ENCODE measurements at regions of chr2 and their contacts with region 1.

Region 1: GRCh38 chr2:102355526-102356380 is at the start of gene IL18R1:
- DNase-seq: peak; percentile 54 to 56
- ATAC-seq: peak; percentile 92 to 96
- H3K4me3 ChIP-seq: peak within 1 kb of the TSS; percentile 63 to 80 (median 68)
- H3K27ac ChIP-seq: peak within 1 kb of the TSS; percentile 14 to 61 (median 40)
- H3K4me1 ChIP-seq: peaks cover 0 to 6% of the 10 kb centered on the region in 2 donors
- H3K27me3 ChIP-seq: no peaks in the 10 kb centered on the region
- CTCF ChIP-seq: peak; percentile 62 to 91 (median 73)
- POLR2A ChIP-seq: no peak
- total RNA-seq, gene IL18R1: 0.36 to 2.8 (median 1.1) TPM

Region 2: DNA sequence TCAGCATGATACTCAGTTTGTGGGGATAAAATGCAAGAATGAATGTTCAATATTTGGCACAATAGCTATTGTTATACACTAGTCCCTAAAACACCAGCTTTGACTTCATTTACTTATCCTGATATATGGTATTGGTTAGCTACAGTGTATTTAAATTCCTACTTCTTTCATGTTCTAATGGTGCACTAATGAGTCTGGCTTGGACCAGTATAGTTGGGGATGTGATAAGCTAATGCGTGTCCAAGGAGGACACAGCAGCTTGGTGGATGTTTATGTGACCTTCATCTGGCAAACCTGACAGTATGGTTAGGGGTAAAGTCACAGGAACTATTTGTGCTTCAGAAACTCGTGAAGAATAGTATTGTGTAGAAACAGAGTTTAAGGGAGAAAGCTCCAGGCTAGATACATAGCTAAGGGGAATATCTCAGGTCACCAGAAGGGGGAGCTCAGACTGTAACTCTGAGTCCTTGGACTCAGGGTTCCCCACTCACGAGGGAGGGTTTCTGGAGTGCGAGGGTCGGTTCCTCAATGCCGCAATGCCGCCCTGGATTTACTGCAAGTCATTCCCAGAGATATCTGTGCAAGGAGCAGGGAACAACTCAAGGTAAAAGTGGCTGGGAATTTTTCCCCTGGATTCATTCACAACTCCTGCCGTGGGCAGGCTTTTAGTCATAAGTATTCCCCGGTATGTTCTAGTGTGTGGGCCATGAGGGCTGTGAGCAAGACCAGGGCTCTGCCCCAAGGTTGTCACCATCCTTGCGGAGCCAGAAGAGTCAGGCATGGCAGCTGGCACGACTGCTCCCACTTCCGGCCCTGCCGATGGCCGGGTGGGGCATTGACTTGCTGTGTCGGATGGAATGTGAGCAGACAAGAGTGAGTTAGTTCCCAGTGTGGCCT is 349.5 kb before region 1 on chr2:
- in situ Hi-C with region 1: no loop called
- intact Hi-C with region 1: loop called (anchors 5 kb)
- DNase-seq: no peak
- ATAC-seq: peak; percentile 68 to 80
- H3K4me3 ChIP-seq: no peak overlapping the region
- H3K27ac ChIP-seq: no peak overlapping the region
- H3K4me1 ChIP-seq: peaks cover 0 to 6% of the 10 kb centered on the region in 2 donors
- H3K27me3 ChIP-seq: no peaks in the 10 kb centered on the region
- CTCF ChIP-seq: peak in 4 of 5 experiments; percentile 40 to 57 (median 48)
- POLR2A ChIP-seq: no peak

Region 3: GRCh38 chr2:102187496-102188150 is 168.1 kb before region 1 on chr2:
- in situ Hi-C with region 1: no loop called
- intact Hi-C with region 1: loop called (anchors 10 kb)
- DNase-seq: peak; percentile 31 to 41
- ATAC-seq: peak; percentile 72 to 75
- H3K4me3 ChIP-seq: peak overlapping the region; percentile 56 to 66 (median 61)
- H3K27ac ChIP-seq: peak overlapping the region; percentile 50 to 74 (median 60)
- H3K4me1 ChIP-seq: no peaks in the 10 kb centered on the region
- H3K27me3 ChIP-seq: no peaks in the 10 kb centered on the region
- CTCF ChIP-seq: peak in 4 of 5 experiments; percentile 27 to 54 (median 50)
- POLR2A ChIP-seq: peak in 1 of 2 donors; percentile 28

Region 4: GRCh38 chr2:102251042-102251848 is 104.5 kb before region 1 on chr2:
- in situ Hi-C with region 1: loop called in 2 of 4 experiments (anchors 5 to 10 kb)
- intact Hi-C with region 1: loop called (anchors 2 kb)
- DNase-seq: peak in 1 of 2 donors; percentile 44
- ATAC-seq: peak; percentile 48 to 66
- H3K4me3 ChIP-seq: peak overlapping the region; percentile 34 to 54 (median 42)
- H3K27ac ChIP-seq: peak overlapping the region in 1 of 4 donors; percentile 2
- H3K4me1 ChIP-seq: peaks cover under 1 to 4% of the 10 kb centered on the region in 2 donors
- H3K27me3 ChIP-seq: peaks cover 0 to 16% (median 0%) of the 10 kb centered on the region in 3 donors
- CTCF ChIP-seq: peak; percentile 42 to 64 (median 56)
- POLR2A ChIP-seq: no peak

Region 5: GRCh38 chr2:102761763-102762162 is 406.0 kb after region 1 on chr2 and contains the start of gene TMEM182:
- in situ Hi-C with region 1: no loop called
- intact Hi-C with region 1: no loop called
- DNase-seq: peak; percentile 80 to 92
- ATAC-seq: peak; percentile 96
- H3K4me3 ChIP-seq: peak within 1 kb of the TSS; percentile 29 to 50 (median 48)
- H3K27ac ChIP-seq: peak within 1 kb of the TSS; percentile 74 to 91 (median 86)
- H3K4me1 ChIP-seq: peaks cover 48 to 64% of the 10 kb centered on the region in 2 donors
- H3K27me3 ChIP-seq: no peaks in the 10 kb centered on the region
- CTCF ChIP-seq: no peak
- POLR2A ChIP-seq: peak; percentile 22 to 40
- total RNA-seq, gene TMEM182: 6.1 to 15.2 (median 8.0) TPM

Measured in gastrocnemius medialis (tissue), 4 donors.